Left ventricle myocardium superior (tissue), 1 donor: ENCODE measurements at regions of chr19 and their contacts with region 1.

Region 1: DNA sequence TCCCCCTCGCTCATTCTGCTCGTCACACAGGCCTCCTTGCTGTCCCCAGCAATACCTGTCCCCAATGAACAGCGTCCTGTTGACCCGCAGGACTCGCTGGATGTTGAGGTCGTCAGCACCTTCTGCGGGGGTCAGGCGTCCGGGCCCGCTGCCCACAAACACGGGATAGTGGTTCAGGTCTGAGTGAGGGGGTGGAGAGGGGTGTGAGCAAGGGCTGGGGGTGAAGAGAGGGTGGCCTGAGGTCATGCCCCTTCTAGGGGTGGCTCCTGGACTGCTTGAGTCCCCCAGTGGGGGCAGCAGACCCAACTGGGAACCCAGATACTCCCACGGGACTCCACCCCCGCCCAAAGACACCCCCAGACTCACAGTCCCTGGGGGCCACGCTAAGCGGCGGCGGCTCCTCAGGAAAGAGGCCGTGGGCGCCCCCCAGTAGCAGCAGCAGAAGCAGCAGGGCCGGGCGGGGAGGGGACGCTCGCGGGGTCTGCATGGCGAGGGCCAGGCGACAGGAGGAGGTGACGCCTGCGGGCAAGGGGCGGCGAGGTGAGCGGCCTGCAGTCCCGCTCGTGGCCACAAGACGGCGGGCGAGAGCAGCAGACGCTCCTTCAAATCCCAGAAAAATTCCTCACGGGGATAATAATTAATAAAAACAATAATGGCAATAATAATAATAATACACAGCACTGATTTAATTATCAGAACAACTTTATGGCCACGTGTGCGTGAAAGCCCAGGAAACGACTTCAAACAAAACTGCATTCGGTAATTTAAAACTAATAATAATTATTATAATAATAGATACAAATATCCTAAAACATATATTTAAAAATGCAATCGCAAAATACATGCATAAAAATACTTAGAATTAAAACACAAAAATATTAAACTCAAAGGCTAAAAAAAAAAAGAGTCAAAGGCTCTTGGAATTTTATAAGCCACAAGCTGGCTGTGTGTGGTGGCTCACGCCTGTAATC is 1.2 kb downstream of the SEMA6B start:
- DNase-seq: peak; percentile 72
- ATAC-seq: peak; percentile 12

Region 2: DNA sequence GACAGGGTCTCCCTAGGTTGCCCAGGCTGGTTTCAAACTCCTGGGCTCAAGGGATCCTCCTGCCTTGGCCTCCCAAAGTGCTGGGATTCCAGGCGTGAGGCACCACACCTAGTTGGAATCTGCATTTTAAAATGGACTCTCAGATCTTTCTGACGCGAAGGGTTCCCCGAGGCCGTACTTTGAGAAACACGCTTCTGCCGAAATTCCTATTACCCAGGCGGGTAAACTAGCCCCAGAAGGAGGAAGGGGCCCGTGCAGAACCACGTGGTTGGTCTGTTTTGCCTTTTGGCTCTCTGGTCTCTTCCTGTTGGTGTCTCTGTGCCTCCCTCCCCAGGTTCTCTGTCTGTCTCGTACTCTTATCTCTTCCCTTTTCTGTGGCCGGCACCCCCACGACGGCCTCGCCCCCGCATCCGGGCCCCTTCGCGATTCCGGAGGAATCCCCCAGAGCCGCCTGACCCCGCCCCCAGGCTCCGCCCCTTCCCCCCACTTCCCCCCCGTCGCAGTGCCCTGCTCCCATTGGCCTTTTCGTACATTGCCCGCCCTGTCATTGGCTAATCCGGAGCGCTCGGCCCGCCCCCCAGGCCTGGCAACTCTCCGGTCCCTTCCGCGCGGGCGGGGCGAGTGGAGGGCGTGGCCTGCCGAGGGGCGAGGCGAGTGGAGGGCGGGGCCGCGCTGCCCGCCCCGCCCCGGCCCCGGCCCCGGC is 80.7 kb after region 1 on chr19 and contains the start of gene TNFAIP8L1:
- intact Hi-C with region 1: loop called (anchors 5 kb)
- DNase-seq: peak; percentile 98
- ATAC-seq: peak; percentile 93
- total RNA-seq, gene TNFAIP8L1: 4.8 TPM